Activated CD4-positive, alpha-beta T cell treated with anti-CD3 and anti-CD28 coated beads for 36 hours (primary cell): ENCODE measurements at regions of chr1 and their contacts with region 1.

Region 1: DNA sequence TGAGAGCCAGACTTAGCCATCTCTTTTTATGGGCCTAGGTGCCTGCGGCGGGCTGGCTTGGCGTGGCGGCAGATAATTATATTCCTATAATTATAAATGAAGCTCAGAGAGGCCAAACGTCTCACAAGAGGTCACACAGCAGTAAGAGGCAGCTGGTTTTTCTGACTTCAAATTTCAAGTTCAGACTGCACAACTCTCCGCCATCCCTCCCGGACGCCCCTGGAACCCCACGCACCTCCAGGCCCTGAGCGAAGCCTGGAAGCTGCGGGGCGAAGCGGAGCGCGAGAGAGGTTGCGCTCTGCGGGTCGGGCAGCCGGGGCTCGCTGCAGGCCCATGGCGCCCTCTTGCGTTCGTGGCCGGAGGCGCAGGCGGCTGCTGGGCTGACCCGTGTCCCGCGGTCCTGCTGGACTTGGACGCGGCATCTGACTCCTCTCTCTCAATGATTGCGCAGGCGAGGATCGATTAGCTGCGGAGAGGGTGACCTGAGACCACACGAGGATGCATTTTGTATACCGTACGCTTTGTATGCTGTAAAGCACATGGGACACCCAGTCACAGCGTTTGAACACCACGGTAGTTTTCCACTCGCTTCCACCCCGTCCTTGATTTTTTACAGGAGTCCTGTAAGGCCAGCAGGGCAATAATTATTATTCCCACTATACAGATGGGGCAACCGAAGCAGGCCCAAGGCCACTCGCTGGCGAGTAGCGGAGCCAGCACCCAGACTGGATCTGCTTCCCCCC is 272.7 kb downstream of the FOXD2 start:
- DNase-seq: peak; percentile 84
- ATAC-seq: peak; percentile 83
- H3K4me3 Mint-ChIP-seq: no peak overlapping the region
- H3K27ac Mint-ChIP-seq: no peak overlapping the region
- H3K4me1 Mint-ChIP-seq: peaks cover 5% of the 10 kb centered on the region
- H3K27me3 Mint-ChIP-seq: peaks cover 64% of the 10 kb centered on the region

Region 2: DNA sequence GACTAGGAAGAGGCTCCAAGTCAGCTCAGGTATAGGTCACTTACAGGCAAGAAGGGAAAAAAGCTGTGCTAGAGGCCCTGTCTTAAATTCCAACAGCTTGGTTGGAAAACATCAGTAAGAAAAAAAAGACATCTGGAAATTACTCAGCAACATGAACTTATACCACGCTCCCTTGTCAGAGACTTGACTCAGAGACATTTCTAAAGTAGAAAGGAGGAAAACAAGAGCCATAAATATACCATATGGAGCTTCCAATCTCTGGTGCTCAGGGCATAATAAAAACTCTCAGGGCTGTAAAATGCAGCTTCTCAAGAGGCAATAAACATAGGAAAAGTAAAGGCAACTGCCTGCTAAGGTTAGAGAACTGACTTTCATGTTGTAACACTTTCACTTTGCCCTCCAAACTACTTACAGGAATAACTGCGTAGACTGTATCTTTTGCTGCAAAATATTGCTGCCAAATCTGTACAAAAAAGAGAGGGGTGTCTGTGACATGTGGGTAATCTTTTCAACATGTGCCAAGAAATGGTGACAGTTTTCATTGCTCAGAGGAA is 1057.0 kb before region 1 on chr1:
- CTCF ChIA-PET with region 1: no interaction called
- POLR2A ChIA-PET with region 1: no interaction called
- intact Hi-C with region 1: no loop called
- DNase-seq: no peak
- ATAC-seq: peak; percentile 65
- H3K4me3 Mint-ChIP-seq: no peak overlapping the region
- H3K27ac Mint-ChIP-seq: peak overlapping the region; percentile 20
- H3K4me1 Mint-ChIP-seq: peaks cover 21% of the 10 kb centered on the region
- H3K27me3 Mint-ChIP-seq: no peaks in the 10 kb centered on the region

Region 3: GRCh38 chr1:47179017-47179987 is 531.2 kb before region 1 on chr1:
- CTCF ChIA-PET with region 1: interaction called, 4 read pairs
- POLR2A ChIA-PET with region 1: no interaction called
- intact Hi-C with region 1: loop called in 1 of 2 experiments (anchors 1 kb)
- DNase-seq: peak; percentile 91
- ATAC-seq: peak; percentile 90
- H3K4me3 Mint-ChIP-seq: peak overlapping the region; percentile 57
- H3K27ac Mint-ChIP-seq: no peak overlapping the region
- H3K4me1 Mint-ChIP-seq: peaks cover 8% of the 10 kb centered on the region
- H3K27me3 Mint-ChIP-seq: peaks cover 22% of the 10 kb centered on the region

Region 4: GRCh38 chr1:47192458-47193384 is 517.8 kb before region 1 on chr1:
- CTCF ChIA-PET with region 1: no interaction called
- POLR2A ChIA-PET with region 1: no interaction called
- intact Hi-C with region 1: loop called in 1 of 2 experiments (anchors 1 kb)
- DNase-seq: peak; percentile 77
- ATAC-seq: peak; percentile 89
- H3K4me3 Mint-ChIP-seq: no peak overlapping the region
- H3K27ac Mint-ChIP-seq: peak overlapping the region; percentile 61
- H3K4me1 Mint-ChIP-seq: no peaks in the 10 kb centered on the region
- H3K27me3 Mint-ChIP-seq: peaks cover 5% of the 10 kb centered on the region

Region 5: GRCh38 chr1:47388891-47389238 is 321.6 kb before region 1 on chr1:
- CTCF ChIA-PET with region 1: interaction called, 12 read pairs
- POLR2A ChIA-PET with region 1: no interaction called
- intact Hi-C with region 1: loop called (anchors 1 kb)
- DNase-seq: peak; percentile 76
- ATAC-seq: peak; percentile 82
- H3K4me3 Mint-ChIP-seq: no peak overlapping the region
- H3K27ac Mint-ChIP-seq: no peak overlapping the region
- H3K4me1 Mint-ChIP-seq: no peaks in the 10 kb centered on the region
- H3K27me3 Mint-ChIP-seq: peaks cover 3% of the 10 kb centered on the region

Region 6: DNA sequence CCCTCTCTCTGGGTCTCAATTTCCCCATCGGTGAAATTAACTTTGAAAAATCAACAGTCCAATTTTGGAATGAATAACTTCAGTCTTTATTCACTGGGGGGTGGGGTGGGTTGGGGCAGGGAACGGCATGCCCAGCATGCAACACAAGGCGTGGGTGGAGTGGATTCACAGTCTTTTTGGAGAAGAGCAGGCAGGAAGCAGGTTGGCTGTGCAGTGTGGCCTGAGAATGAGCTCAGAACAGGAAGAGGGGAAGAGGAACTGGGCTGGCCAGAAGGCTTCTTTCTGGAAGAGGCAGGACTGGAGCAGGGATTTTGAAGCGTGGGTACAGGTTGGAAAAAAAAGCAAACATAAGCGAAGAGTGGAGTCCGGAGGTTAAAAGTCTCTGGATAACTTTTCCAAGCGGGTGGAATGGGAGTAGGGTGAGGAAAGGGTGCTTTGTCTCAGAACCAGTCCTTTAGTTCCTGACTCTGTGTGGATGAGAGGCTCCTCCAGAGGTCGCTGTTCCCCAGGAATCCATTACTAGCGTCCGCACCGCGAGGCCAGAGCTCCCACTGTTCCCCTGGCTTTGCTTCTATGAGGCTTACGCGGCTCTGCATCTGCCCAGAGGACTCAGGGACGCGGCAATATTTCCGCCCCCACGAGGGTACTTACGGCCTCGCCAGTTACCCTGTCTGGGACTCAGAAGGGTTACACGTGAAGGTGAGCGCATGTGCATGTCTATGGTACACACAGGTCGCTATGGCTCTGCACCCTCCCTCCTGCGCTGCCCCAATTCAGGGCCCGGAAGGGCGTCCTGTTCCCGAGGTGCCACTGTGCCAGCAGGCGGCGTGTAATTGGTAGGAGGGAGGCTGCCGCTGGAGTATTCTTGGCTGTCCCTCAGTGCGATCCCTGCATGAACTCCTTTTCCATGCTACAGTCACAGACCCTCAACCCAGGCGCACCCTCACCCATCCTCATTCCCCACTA is 278.1 kb before region 1 on chr1:
- CTCF ChIA-PET with region 1: interaction called, 28 read pairs
- POLR2A ChIA-PET with region 1: no interaction called
- intact Hi-C with region 1: loop called (anchors 1 to 2 kb)
- DNase-seq: peak; percentile 81
- ATAC-seq: peak; percentile 55
- H3K4me3 Mint-ChIP-seq: peak overlapping the region; percentile 49
- H3K27ac Mint-ChIP-seq: no peak overlapping the region
- H3K4me1 Mint-ChIP-seq: peaks cover 31% of the 10 kb centered on the region
- H3K27me3 Mint-ChIP-seq: peaks cover 42% of the 10 kb centered on the region

Region 7: DNA sequence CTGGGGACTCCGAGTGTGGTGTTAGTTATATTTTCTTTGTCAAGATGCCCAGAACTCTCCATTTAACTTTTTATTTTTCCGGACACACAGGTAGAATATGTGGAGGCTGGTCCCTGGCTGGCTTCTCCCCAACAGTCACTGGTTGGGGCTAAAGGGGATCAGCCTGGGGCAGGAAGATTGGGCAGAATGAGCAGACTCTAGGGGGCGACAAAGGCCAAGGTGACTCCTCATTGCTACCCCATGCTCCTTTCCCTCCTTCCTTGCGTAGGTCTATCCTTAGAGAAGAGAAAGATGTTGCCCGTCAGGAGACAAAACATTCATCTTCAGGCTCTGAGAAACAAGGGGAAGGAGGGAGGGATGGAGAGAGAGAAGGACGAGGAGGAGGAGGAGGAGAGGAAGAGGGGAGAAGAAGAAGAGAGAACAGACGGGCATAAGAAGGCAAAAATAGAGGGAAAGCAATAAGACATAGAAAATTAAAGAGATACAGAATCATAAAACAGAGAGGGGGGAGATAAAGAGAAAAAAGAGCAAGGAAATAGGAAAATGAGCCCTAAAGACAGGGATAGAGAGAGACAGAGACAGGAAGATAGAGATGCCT is 182.7 kb before region 1 on chr1:
- CTCF ChIA-PET with region 1: no interaction called
- POLR2A ChIA-PET with region 1: no interaction called
- intact Hi-C with region 1: loop called in 1 of 2 experiments (anchors 2 kb)
- DNase-seq: peak; percentile 35
- ATAC-seq: no peak
- H3K4me3 Mint-ChIP-seq: no peak overlapping the region
- H3K27ac Mint-ChIP-seq: no peak overlapping the region
- H3K4me1 Mint-ChIP-seq: no peaks in the 10 kb centered on the region
- H3K27me3 Mint-ChIP-seq: peaks cover 66% of the 10 kb centered on the region

Region 8: GRCh38 chr1:48082271-48082962 is 371.9 kb after region 1 on chr1:
- CTCF ChIA-PET with region 1: no interaction called
- POLR2A ChIA-PET with region 1: no interaction called
- intact Hi-C with region 1: no loop called
- DNase-seq: no peak
- ATAC-seq: no peak
- H3K4me3 Mint-ChIP-seq: no peak overlapping the region
- H3K27ac Mint-ChIP-seq: no peak overlapping the region
- H3K4me1 Mint-ChIP-seq: no peaks in the 10 kb centered on the region
- H3K27me3 Mint-ChIP-seq: peaks cover 15% of the 10 kb centered on the region